Activated B cell treated with CpG ODN at 0.5 μM for 24 hours (primary cell): ENCODE measurements at regions of chr4 and their contacts with region 1.

Region 1: DNA sequence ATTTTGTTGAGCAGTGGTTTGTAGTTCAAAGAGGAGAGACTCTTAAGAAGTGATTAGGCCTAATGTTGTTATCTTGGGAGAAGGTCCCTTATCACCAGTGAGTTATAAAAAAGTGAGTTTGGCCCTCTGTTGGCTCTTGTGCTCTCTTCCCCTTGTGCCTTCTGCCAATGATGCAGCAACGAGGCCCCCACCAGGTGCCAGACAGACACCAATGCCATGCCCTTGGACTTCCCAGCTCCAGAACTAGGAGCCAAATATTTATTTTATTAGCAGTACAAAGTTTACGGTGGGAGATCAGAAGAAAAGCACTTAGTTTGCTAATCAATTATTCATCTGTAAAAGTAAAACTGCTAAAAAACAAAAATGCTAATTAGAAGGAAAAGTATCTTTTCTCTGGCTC is 22.7 kb upstream of the NAAA start:
- DNase-seq: no peak
- ATAC-seq: no peak
- H3K4me3 Mint-ChIP-seq: no peak overlapping the region
- H3K27ac Mint-ChIP-seq: no peak overlapping the region
- H3K4me1 Mint-ChIP-seq: no peaks in the 10 kb centered on the region
- H3K27me3 Mint-ChIP-seq: no peaks in the 10 kb centered on the region
- CTCF ChIP-seq: no peak

Region 2: GRCh38 chr4:75454508-75454907 is 509.1 kb before region 1 on chr4:
- CTCF ChIA-PET with region 1: no interaction called
- POLR2A ChIA-PET with region 1: no interaction called
- intact Hi-C with region 1: no loop called
- DNase-seq: no peak
- ATAC-seq: no peak
- H3K4me3 Mint-ChIP-seq: no peak overlapping the region
- H3K27ac Mint-ChIP-seq: no peak overlapping the region
- H3K4me1 Mint-ChIP-seq: no peaks in the 10 kb centered on the region
- H3K27me3 Mint-ChIP-seq: peaks cover 8% of the 10 kb centered on the region
- CTCF ChIP-seq: no peak

Region 3: DNA sequence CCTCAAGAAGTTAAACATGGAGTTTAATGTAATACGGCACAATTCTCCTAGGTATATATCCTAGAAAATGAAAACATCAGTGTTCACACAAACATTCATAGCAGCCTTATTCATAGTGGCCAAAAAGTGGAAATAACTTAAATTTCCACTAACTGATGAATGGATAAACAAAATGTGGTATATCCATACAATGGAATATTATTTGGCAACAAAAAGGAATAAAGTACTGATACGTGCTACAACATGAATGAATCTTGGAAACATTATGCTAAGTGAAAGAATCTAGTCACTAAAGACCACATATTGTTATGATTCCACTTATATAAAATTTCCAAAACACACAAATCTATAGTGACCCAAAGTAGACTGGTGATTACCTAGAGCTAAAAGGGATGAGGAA is 12.6 kb after region 1 on chr4:
- CTCF ChIA-PET with region 1: no interaction called
- POLR2A ChIA-PET with region 1: no interaction called
- intact Hi-C with region 1: loop called (anchors 2 kb)
- DNase-seq: no peak
- ATAC-seq: no peak
- H3K4me3 Mint-ChIP-seq: no peak overlapping the region
- H3K27ac Mint-ChIP-seq: no peak overlapping the region
- H3K4me1 Mint-ChIP-seq: no peaks in the 10 kb centered on the region
- H3K27me3 Mint-ChIP-seq: no peaks in the 10 kb centered on the region
- CTCF ChIP-seq: no peak